Activated CD4-positive, alpha-beta T cell treated with anti-CD3 and anti-CD28 coated beads for 36 hours (primary cell): ENCODE measurements at regions of chr17 and their contacts with region 1.

Region 1: DNA sequence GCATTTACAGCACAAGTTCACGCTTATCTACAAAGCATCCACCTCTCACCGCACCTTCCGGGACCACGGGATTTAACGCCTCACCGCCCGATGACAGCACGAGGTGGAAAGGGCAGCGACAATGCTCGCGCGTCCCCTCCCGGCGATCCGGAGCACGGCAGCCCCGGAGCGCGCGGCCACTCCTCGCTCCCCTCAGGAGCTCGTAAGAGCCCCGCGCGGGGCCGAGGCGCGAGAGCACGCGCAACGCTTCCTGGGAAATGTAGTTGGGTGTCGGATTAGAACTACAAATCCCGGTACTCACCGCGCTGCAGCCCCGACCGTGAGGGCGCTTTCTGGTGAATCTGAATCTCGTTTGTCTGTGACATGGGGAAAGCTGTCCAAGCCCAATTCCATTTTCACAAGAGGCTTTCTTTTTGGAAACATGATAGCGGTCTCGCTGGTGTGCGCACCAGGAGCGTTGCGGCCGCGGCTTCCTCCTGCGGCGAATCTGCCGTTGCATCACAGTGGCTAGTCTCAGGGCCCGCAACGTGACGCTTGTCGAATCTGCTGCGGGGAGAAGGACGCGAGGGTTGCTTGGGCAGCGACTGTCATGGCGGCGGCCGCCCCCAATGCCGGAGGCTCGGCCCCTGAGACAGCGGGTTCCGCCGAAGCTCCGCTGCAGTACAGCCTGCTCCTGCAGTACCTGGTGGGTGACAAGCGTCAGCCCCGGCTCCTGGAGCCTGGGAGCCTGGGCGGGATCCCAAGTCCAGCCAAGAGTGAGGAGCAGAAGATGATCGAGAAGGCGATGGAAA is at the start of gene TIMM22:
- DNase-seq: peak; percentile 96
- ATAC-seq: peak; percentile 97
- H3K4me3 Mint-ChIP-seq: peak within 1 kb of the TSS; percentile 86
- H3K27ac Mint-ChIP-seq: peak within 1 kb of the TSS; percentile 96
- H3K4me1 Mint-ChIP-seq: peaks cover 20% of the 10 kb centered on the region
- H3K27me3 Mint-ChIP-seq: no peaks in the 10 kb centered on the region
- total RNA-seq, gene TIMM22: 9.4 to 9.8 TPM

Region 2: GRCh38 chr17:409848-410545 is 586.8 kb before region 1 on chr17:
- CTCF ChIA-PET with region 1: interaction called, 9 read pairs
- POLR2A ChIA-PET with region 1: no interaction called
- intact Hi-C with region 1: loop called (anchors 1 to 2 kb)
- DNase-seq: peak; percentile 100
- ATAC-seq: peak; percentile 71
- H3K4me3 Mint-ChIP-seq: peak overlapping the region; percentile 77
- H3K27ac Mint-ChIP-seq: peak overlapping the region; percentile 82
- H3K4me1 Mint-ChIP-seq: peaks cover 54% of the 10 kb centered on the region
- H3K27me3 Mint-ChIP-seq: peaks cover 2% of the 10 kb centered on the region

Region 3: DNA sequence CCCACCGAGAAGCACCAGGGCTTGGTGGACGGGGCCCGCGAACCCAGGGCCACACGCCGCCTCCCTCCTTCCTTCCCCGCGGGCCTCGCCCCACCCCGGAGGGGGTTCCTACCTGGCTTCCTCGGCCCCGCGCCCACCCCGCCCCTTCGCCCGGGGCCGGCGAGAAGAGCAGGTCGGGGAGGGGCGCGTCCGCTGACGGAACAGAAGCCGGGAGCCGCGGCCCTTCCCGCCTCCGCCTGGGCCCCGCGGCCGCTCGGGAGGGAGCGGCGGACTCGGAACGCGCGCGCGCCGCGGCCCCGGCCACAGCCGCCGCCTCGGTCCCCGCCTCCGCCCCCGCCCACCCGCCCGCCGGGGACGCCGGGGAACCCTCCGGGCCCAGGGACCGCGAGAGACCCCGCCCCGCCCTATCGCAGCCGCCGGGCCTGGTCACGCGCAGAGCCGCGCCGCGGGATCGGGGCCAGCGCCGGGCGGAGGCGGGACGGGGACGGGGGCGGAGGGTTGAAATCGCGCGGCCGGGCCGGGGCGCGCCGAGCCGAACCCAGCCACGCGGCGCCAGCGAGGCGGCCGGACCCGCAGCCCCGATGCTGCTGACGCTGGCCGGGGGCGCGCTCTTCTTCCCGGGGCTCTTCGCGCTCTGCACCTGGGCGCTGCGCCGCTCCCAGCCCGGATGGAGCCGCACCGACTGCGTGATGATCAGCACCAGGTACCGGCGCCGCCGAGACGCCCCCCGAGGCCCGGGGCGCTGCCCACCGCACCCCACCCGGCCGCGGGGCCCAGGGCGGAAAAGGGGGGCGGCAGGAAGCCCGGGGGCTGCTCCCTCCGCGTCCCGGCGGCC is 264.5 kb before region 1 on chr17 and contains the start of gene TLCD3A:
- CTCF ChIA-PET with region 1: no interaction called
- POLR2A ChIA-PET with region 1: no interaction called
- intact Hi-C with region 1: loop called in 1 of 2 experiments (anchors 5 kb)
- DNase-seq: peak; percentile 77
- ATAC-seq: peak; percentile 68
- H3K4me3 Mint-ChIP-seq: peak within 1 kb of the TSS; percentile 87
- H3K27ac Mint-ChIP-seq: peak within 1 kb of the TSS; percentile 70
- H3K4me1 Mint-ChIP-seq: peaks cover 11% of the 10 kb centered on the region
- H3K27me3 Mint-ChIP-seq: peaks cover 21% of the 10 kb centered on the region
- total RNA-seq, gene TLCD3A: 13.8 to 25.9 TPM

Region 4: GRCh38 chr17:781805-782731 is 214.7 kb before region 1 on chr17 and contains the starts of genes GLOD4 and MRM3:
- CTCF ChIA-PET with region 1: interaction called, 13 read pairs
- POLR2A ChIA-PET with region 1: no interaction called
- intact Hi-C with region 1: loop called (anchors 1 to 5 kb)
- DNase-seq: peak; percentile 96
- ATAC-seq: peak; percentile 89
- H3K4me3 Mint-ChIP-seq: peak within 1 kb of the TSS; percentile 97
- H3K27ac Mint-ChIP-seq: peak within 1 kb of the TSS; percentile 96
- H3K4me1 Mint-ChIP-seq: peaks cover 35% of the 10 kb centered on the region
- H3K27me3 Mint-ChIP-seq: no peaks in the 10 kb centered on the region
- total RNA-seq, gene GLOD4: 59.5 to 64.0 TPM
- total RNA-seq, gene MRM3: 20.6 to 31.4 TPM

Region 5: GRCh38 chr17:879549-880442 is 117.0 kb before region 1 on chr17:
- CTCF ChIA-PET with region 1: interaction called, 6 read pairs
- POLR2A ChIA-PET with region 1: no interaction called
- intact Hi-C with region 1: loop called (anchors 1 to 5 kb)
- DNase-seq: peak; percentile 83
- ATAC-seq: peak; percentile 83
- H3K4me3 Mint-ChIP-seq: no peak overlapping the region
- H3K27ac Mint-ChIP-seq: no peak overlapping the region
- H3K4me1 Mint-ChIP-seq: peaks cover 12% of the 10 kb centered on the region
- H3K27me3 Mint-ChIP-seq: peaks cover 20% of the 10 kb centered on the region

Region 6: DNA sequence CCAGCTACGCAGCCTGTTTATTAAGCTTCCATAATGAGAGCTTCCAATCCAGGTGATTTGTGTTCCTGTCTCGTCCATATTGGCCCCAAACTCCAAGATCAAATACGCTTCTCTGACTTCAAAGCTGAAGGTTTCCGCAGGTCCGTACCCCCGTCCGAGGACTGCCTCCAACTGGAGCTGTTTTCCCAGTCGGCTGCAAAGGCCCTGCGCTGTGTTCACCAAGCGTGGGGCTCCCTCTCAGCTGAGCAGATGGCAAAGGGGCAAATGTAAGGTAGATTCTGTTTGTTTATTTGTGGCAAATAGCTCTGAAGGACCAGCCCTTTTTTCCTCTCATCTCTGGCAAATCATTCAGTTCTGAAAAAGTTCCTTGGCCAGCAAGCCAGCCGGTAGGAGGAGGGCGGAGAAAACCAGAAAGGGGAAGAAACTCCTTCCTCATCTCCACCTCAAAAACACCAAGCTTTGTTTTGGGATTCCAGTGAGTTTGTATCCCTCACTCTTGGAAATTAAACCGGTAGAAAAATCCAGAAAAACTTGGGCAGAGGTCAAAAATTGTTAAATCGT is 52.4 kb before region 1 on chr17:
- CTCF ChIA-PET with region 1: no interaction called
- POLR2A ChIA-PET with region 1: no interaction called
- intact Hi-C with region 1: no loop called
- DNase-seq: no peak
- ATAC-seq: no peak
- H3K4me3 Mint-ChIP-seq: no peak overlapping the region
- H3K27ac Mint-ChIP-seq: no peak overlapping the region
- H3K4me1 Mint-ChIP-seq: no peaks in the 10 kb centered on the region
- H3K27me3 Mint-ChIP-seq: peaks cover 3% of the 10 kb centered on the region

Region 7: GRCh38 chr17:1203111-1203966 is 206.6 kb after region 1 on chr17:
- CTCF ChIA-PET with region 1: interaction called, 3 read pairs
- POLR2A ChIA-PET with region 1: no interaction called
- intact Hi-C with region 1: loop called in 1 of 2 experiments (anchors 1 kb)
- DNase-seq: peak; percentile 72
- ATAC-seq: peak; percentile 56
- H3K4me3 Mint-ChIP-seq: no peak overlapping the region
- H3K27ac Mint-ChIP-seq: no peak overlapping the region
- H3K4me1 Mint-ChIP-seq: peaks cover 16% of the 10 kb centered on the region
- H3K27me3 Mint-ChIP-seq: peaks cover 2% of the 10 kb centered on the region

Region 8: DNA sequence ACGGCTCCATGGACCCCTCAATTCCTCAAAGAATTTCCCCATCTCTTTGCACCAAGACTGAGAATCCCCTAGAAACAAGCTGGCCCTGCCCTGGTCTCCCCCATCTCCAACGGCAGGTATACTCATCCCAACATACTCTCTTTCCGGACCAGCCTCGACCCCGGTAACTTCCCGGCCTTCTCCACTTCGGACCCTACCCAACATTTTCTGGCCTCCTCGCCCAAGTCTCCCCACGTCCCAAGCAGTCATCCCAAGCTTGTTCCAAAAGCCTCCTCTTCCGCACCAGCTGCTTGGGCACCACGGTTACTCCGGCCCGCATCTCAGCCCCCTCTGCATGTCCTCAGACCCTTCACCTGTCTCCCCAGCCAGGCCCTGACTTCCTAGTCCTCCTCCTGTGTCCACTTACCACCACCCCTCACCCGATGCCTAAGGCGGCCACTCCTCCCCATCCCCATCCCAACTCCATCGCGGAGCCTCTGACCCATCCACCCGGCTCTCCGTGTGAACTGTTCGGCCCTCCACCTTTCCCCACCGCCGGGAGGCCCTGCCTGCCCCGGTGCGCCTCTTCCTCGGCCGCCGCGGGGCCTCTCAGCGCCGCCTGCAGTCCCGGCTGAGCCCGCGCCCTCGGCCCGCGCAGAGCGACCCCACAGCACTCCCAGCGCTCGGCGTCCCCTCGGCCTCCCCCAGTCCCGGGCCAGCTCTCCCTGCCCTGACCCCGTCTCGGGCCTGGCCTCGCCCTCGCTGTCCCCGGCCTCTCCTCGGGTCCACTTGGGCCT is 564.8 kb after region 1 on chr17:
- CTCF ChIA-PET with region 1: no interaction called
- POLR2A ChIA-PET with region 1: no interaction called
- intact Hi-C with region 1: loop called in 1 of 2 experiments (anchors 2 kb)
- DNase-seq: peak; percentile 64
- ATAC-seq: peak; percentile 35
- H3K4me3 Mint-ChIP-seq: peak overlapping the region; percentile 81
- H3K27ac Mint-ChIP-seq: no peak overlapping the region
- H3K4me1 Mint-ChIP-seq: peaks cover 27% of the 10 kb centered on the region
- H3K27me3 Mint-ChIP-seq: no peaks in the 10 kb centered on the region